ENCODE measurements at regions of chr5 and their contacts with region 1.

Region 1: DNA sequence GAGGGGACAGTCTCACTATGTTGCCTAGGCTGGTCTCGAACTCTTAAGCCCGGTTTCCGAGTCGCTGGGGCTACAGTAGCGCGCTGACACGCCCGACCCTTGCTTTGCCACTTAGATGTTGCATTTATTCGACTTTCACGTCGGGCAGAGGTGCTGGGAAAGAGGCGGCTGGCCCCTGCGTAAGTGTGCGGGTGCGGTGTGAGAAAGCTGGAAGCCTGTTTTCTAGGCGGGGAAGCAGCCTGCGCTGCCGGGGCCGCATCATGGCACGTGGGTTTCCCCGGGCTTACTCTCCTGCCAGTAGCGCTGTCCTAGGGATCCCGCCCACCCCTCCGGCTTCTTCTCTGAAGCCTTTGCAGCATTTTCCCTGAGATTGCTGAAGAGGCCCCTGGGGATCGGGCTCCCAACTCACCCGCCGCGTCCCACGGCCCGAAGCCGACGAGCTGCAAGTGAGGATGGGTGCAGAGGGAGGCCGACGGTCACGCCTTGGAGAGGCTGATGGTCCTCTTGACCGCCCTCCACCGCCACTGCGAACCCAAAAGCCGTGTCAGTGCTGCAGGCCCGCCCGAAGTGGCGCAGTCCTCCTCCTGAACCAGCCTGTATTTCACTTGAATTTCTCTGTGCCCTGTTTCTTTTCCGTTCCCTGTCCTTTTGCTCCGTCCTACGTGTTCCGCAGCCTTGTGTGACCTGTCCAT is 5.8 kb upstream of the TRIM41 start:
- DNase-seq: peak; percentile 61
- H3K4me3 Mint-ChIP-seq: peak overlapping the region; percentile 87
- H3K27ac Mint-ChIP-seq: peak overlapping the region; percentile 89
- H3K4me1 Mint-ChIP-seq: peaks cover 56% of the 10 kb centered on the region
- H3K27me3 Mint-ChIP-seq: peaks cover 7% of the 10 kb centered on the region

Region 2: GRCh38 chr5:181121659-181122561 is 95.3 kb before region 1 on chr5:
- CTCF ChIA-PET with region 1: no interaction called
- POLR2A ChIA-PET with region 1: no interaction called
- DNase-seq: no peak
- H3K4me3 Mint-ChIP-seq: no peak overlapping the region
- H3K27ac Mint-ChIP-seq: no peak overlapping the region
- H3K4me1 Mint-ChIP-seq: no peaks in the 10 kb centered on the region
- H3K27me3 Mint-ChIP-seq: peaks cover 23% of the 10 kb centered on the region

Region 3: GRCh38 chr5:181243512-181244343 is 26.5 kb after region 1 on chr5 and contains the start of gene RACK1:
- CTCF ChIA-PET with region 1: interaction called, 4 read pairs
- POLR2A ChIA-PET with region 1: interaction called, 1,091 read pairs
- DNase-seq: peak; percentile 91
- H3K4me3 Mint-ChIP-seq: peak within 1 kb of the TSS; percentile 97
- H3K27ac Mint-ChIP-seq: peak within 1 kb of the TSS; percentile 92
- H3K4me1 Mint-ChIP-seq: peaks cover 67% of the 10 kb centered on the region
- H3K27me3 Mint-ChIP-seq: no peaks in the 10 kb centered on the region
- total RNA-seq, gene RACK1: 1,749 to 1,772 TPM

Measured in activated CD4-positive, alpha-beta memory T cell treated with anti-CD3 and anti-CD28 coated beads, Interleukin-2, amount 10 ng/mL, durations not matched to agents 7 days and 5 days (primary cell).